Stomach (tissue), 19 donors: ENCODE measurements at regions of chr3 and their contacts with region 1.

Region 1: DNA sequence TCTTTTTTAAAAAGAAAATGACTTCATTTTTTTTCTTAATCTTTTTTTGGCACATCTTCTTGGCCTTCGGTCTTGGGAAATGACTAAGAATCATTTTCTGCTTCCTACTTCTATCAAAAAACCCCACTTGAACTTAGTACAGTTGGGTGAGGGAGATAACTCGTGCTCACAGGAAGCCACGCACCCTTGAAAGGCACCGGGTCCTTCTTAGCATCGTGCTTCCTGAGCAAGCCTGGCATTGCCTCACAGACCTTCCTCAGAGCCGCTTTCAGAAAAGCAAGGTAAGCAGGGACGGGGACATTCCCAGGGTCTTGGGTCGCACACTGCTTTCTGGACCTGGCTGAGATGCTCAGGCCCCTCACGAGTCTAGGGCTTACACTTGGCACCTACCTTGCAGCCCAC is at the start of gene CCR4:
- DNase-seq: peak in 1 of 2 donors; percentile 40
- H3K4me3 ChIP-seq: no peak within 1 kb of the TSS
- H3K27ac ChIP-seq: no peak within 1 kb of the TSS
- H3K4me1 ChIP-seq: peaks cover 0 to 17% (median 0%) of the 10 kb centered on the region in 4 donors
- H3K27me3 ChIP-seq: no peaks in the 10 kb centered on the region
- CTCF ChIP-seq: no peak
- EP300 ChIP-seq: no peak
- POLR2A ChIP-seq: no peak
- total RNA-seq, gene CCR4: 0.58 to 1.1 TPM in 2 of 5 donors, not detected in the others

Region 2: DNA sequence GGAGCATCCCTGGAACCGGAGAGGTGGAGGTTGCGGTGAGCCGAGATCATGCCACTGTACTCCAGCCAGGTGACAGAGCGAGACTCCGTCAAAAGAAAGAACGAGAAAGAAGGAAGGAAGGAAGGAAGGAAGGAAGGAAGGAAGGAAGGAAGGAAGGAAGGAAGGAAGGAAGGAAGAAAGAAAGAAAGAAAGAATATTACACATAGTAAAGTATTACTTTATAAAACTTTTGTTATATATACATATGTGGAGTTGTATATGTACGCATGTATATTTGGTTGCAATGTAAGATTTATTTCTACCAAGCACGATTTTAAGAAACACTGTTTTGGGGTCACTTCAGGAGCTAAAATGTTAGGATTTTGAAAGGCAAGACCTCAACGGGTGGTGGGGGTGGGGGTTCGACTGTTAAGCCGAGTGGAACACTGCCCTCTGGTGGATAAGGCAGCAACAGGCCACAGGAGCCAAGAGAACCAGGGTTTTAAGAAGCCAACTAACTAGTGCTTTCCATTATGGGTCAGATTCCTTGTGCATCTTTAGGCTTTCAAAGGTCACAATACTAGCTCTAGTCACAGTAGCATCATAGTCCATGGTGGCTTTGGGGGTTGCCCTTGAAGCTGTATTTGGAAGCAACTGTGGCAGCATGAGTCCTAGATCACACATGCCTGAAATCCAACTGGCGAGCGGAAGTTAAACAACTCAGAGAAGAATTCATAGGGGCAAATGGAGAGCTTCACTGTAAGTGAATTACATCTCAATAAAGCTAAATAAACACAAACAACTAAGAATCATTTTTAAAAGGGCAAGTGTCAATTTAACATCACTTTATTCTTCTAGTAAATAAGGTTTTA is 123.0 kb after region 1 on chr3:
- intact Hi-C with region 1: loop called (anchors 5 kb)
- DNase-seq: peak; percentile 69 to 88
- H3K4me3 ChIP-seq: no peak overlapping the region
- H3K27ac ChIP-seq: no peak overlapping the region
- H3K4me1 ChIP-seq: peaks cover 0 to 42% (median 20%) of the 10 kb centered on the region in 4 donors
- H3K27me3 ChIP-seq: no peaks in the 10 kb centered on the region
- CTCF ChIP-seq: peak in 5 of 7 experiments; percentile 68 to 88 (median 86)
- EP300 ChIP-seq: no peak
- POLR2A ChIP-seq: no peak

Region 3: GRCh38 chr3:33372218-33373081 is 421.0 kb after region 1 on chr3:
- intact Hi-C with region 1: loop called (anchors 10 kb)
- DNase-seq: peak; percentile 45 to 76
- H3K4me3 ChIP-seq: peak overlapping the region in 1 of 4 donors; percentile 13
- H3K27ac ChIP-seq: no peak overlapping the region
- H3K4me1 ChIP-seq: peaks cover 0 to 11% (median 9%) of the 10 kb centered on the region in 4 donors
- H3K27me3 ChIP-seq: no peaks in the 10 kb centered on the region
- CTCF ChIP-seq: peak in 5 of 7 experiments; percentile 81 to 92 (median 87)
- EP300 ChIP-seq: no peak
- POLR2A ChIP-seq: no peak